ENCODE measurements at regions of chr1 and their contacts with region 1.

Region 1: DNA sequence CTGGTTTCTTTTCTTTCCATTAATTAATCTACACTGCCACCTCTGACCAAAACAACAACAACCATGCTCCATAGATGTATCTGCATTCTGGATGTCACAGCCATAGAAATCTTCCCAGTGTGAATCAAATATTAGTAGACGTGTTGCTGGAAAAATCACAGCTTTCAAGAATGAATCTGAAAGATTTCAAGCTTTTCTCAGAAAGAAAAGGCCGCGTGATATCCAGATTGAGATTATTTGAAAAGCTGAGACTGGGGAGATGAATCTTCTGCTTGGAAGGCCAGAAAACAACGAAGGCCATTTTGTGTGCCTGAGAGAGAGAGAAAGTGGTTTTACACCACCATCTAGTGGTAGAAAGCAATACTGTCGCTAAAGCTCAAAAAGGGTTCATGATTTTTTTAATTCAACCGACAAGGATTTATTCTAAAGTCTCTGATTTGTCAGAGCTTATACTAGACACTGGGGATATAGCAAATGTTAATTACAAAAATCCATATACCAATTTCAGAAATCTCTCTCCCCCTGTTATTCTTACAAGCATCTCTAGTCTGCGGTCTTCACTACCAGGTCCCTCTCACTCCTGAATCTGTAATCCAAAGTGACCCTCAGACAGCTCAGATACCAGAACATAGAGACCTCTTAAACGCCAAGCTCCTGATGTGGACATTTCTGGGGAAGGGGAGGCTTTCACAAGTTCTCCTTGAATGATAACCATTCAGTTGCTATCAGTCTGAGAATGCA is 87.5 kb upstream of the SGIP1 start:
- DNase-seq: peak; percentile 41 to 57 (median 50)
- ATAC-seq: peak; percentile 79
- H3K4me3 ChIP-seq: no peak overlapping the region
- H3K27ac ChIP-seq: no peak overlapping the region
- H3K4me1 ChIP-seq: no peaks in the 10 kb centered on the region
- H3K27me3 ChIP-seq: no peaks in the 10 kb centered on the region
- CTCF ChIP-seq: peak; percentile 52 to 89 (median 56); a peak in 5 of 6 replicates
- EP300 ChIP-seq: no peak
- POLR2A ChIP-seq: no peak
- RAD21 ChIP-seq: peak; percentile 83 to 91

Region 2: DNA sequence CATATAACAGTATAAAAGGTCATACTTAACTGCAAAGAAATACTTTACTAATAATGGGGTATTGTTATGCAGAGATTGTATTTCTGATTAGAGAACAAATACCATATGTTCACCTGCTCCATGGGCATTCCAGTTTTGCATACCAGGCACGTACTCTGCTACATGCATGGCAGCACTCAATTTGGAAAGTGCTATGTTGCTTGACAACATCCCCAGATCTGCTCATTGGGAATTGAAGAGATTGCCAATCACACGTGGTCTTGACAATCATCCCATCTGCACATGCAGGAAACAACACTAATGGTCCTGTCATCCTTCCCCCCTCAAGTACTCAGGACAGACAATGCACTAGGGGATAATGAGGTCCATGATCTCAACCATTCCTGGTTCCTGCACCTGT is 717.2 kb before region 1 on chr1:
- CTCF ChIA-PET with region 1: no interaction called
- POLR2A ChIA-PET with region 1: no interaction called
- in situ Hi-C with region 1: no loop called
- intact Hi-C with region 1: loop called (anchors 10 kb)
- DNase-seq: no peak
- ATAC-seq: no peak
- H3K4me3 ChIP-seq: no peak overlapping the region
- H3K27ac ChIP-seq: no peak overlapping the region
- H3K4me1 ChIP-seq: no peaks in the 10 kb centered on the region; a peak in 1 of 5 replicates
- H3K27me3 ChIP-seq: peaks cover 0 to 6% of the 10 kb centered on the region in 2 experiments; a peak in 1 of 5 replicates
- CTCF ChIP-seq: no peak
- EP300 ChIP-seq: no peak
- POLR2A ChIP-seq: no peak
- RAD21 ChIP-seq: no peak

Region 3: DNA sequence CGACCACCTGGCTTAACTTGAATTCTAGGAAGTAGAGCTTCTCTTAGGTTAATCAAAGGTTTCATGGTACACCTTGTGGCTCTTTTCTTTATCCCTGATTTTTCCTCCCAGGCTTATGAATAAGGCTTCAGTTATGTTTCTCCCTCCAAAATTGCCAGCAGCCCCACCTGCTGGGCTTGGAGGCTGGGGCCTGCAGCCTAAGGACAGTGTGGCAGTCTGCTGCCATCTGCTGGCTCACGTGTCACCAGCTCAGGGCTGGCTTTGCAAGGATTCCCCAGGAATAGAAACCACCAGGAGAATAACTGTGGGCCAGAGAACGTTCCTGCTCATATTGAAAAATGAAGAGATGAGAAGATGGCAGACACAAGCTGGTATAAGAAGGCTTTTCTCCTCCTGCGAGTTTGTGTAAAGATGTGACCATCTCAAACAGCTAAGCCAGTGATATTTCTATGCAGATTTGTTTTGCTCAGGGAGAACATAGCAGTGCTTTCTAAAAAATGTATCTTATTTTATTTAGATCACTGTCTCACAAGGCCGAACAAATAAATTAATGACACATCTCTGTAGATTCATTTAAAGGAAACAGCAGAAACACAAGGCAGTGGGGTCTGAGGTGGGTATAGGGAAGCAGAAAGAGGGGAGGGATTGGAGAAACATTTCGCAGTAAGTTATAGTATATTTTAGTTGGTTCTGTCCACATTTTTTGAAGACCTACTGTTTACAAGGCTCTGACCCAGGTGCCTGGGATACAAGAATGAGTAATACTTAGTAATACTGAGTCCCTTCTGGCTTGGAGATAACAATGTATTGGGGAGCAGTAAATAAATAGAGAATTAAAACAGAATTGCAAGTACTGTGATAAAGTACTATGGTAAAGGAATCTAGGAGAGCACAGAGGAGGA is 203.5 kb before region 1 on chr1:
- CTCF ChIA-PET with region 1: interaction called, 7 read pairs
- POLR2A ChIA-PET with region 1: no interaction called
- in situ Hi-C with region 1: loop called (anchors 10 kb)
- intact Hi-C with region 1: no loop called
- DNase-seq: peak; percentile 64 to 84 (median 70)
- ATAC-seq: peak; percentile 100
- H3K4me3 ChIP-seq: no peak overlapping the region
- H3K27ac ChIP-seq: no peak overlapping the region
- H3K4me1 ChIP-seq: no peaks in the 10 kb centered on the region
- H3K27me3 ChIP-seq: peaks cover 0 to 2% of the 10 kb centered on the region in 2 experiments; a peak in 1 of 5 replicates
- CTCF ChIP-seq: peak; percentile 99 to 100 (median 100)
- EP300 ChIP-seq: no peak
- POLR2A ChIP-seq: no peak
- RAD21 ChIP-seq: peak; percentile 93 to 98

Region 4: DNA sequence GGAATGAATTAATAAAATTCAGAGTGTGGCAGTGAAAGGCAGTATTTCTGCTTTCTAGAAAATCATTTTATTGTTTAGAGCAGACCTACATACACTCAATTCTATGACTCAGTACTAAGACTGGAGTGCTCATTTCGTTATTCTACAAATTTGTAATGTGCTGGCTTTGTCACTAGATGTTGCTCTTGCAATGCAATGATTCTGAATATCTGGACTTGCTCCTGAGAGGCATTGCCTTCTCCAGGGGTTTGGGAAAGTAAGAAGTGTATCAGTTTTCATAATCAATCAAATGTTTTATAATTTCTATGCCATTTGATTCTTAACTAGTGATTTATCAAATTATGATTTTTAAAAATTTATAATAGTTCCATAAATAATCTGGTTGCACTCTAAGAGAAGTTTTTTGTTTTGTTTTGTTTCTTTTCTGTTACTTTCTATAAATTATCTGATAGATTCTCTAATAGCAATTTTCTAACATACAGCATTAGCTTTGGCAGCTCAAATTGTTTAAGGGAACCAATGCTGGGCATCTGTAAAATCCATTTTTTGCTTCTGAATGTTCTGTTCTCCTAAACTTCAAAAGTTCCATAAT is 193.0 kb before region 1 on chr1:
- CTCF ChIA-PET with region 1: interaction called, 19 read pairs
- POLR2A ChIA-PET with region 1: no interaction called
- in situ Hi-C with region 1: loop called (anchors 10 kb)
- intact Hi-C with region 1: loop called (anchors 1 kb)
- DNase-seq: peak in 2 of 4 experiments; percentile 28 to 32
- ATAC-seq: peak; percentile 81
- H3K4me3 ChIP-seq: no peak overlapping the region
- H3K27ac ChIP-seq: no peak overlapping the region
- H3K4me1 ChIP-seq: no peaks in the 10 kb centered on the region
- H3K27me3 ChIP-seq: no peaks in the 10 kb centered on the region
- CTCF ChIP-seq: peak; percentile 34 to 78 (median 60); a peak in 5 of 6 replicates
- EP300 ChIP-seq: no peak
- POLR2A ChIP-seq: no peak
- RAD21 ChIP-seq: peak; percentile 81 to 88

Measured in K562 (cell line).